ENCODE measurements at regions of chr1 and their contacts with region 1.

Region 1: GRCh38 chr1:157948312-157949073 is 45.0 kb upstream of the KIRREL1 start:
- DNase-seq: no peak
- ATAC-seq: peak; percentile 70 to 76

Region 2: DNA sequence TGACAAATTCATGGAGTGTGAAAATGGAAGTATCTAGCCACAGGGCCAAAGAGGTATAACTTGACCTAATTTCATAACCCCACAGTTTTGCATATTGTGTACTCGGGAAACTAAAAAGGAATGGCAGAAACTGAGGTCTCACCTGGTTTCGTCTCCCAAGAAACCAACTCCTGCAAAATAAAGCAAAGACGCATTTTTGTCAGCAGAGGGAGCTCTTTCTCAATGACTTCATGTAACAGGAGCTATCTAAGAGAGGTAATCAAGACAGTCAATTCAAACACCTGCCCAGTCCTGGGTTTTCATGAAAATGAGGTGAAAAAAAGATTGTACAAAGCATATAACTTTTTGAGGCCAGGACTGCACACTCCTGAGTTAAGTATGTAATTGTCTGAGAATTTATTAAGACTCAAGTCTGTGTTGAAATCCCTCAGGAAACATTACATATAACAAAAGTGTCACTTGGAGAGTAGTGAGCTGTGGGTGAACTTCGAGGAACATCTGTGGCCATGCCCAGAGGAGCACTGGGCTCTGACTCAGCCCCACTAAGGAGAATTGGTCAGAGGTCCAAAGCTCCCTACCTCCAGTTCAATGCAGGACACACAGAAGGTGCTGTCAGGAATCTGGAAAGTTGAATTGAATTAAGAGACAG is 368.2 kb before region 1 on chr1:
- intact Hi-C with region 1: loop called in 1 of 2 experiments (anchors 5 kb)
- DNase-seq: no peak
- ATAC-seq: no peak

Region 3: DNA sequence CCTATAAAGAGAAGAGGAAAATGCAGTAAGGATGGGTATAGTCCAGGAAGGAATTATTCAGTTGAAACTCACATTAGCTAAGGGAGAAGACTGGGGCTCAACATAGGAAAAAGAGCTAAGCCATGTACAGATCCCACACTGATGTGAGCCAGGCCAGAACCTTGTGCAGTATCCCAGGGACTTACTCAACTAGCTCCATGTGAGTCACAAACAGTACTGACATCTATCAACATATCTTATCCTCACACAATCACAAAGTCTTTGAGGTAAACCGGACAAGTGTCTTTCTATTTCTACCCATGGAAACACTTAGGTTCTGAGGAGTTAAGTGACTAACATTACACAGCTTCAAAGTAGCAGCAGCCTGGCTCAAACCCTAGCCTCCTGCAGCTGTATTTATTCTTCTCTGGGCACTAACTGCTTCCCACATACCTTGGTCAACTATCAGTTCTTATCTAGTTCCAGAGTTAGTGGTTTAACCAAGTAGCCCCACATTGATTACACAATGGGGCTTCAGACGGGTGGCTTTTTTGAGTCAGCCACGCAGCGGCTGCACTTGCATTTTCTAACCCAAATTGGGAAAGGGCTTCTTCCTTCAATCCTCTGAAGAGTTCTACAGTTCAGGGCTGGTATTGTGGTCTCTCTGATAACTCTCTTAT is 116.4 kb before region 1 on chr1:
- intact Hi-C with region 1: no loop called
- DNase-seq: no peak
- ATAC-seq: no peak

Region 4: DNA sequence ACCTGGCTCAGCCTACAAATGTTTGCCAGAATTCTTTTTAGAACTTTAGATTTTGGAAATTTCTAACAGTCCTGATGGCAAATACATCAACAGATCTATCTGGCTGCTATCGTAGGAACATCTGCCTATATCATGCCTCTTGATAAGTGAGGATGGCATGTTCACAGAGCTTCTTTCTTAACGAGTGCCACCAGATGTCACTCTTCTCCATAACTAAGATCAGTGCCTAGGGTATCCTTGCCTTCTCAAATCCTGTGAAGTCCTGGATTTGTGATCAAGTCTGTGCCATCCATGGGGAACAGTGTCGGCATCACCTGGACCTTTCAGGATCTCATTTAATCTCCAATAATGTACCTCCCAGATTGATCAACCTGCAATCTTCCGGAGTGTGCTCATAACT is 70.4 kb before region 1 on chr1:
- intact Hi-C with region 1: loop called (anchors 2 to 5 kb)
- DNase-seq: no peak
- ATAC-seq: peak in 1 of 2 donors; percentile 82

Region 5: DNA sequence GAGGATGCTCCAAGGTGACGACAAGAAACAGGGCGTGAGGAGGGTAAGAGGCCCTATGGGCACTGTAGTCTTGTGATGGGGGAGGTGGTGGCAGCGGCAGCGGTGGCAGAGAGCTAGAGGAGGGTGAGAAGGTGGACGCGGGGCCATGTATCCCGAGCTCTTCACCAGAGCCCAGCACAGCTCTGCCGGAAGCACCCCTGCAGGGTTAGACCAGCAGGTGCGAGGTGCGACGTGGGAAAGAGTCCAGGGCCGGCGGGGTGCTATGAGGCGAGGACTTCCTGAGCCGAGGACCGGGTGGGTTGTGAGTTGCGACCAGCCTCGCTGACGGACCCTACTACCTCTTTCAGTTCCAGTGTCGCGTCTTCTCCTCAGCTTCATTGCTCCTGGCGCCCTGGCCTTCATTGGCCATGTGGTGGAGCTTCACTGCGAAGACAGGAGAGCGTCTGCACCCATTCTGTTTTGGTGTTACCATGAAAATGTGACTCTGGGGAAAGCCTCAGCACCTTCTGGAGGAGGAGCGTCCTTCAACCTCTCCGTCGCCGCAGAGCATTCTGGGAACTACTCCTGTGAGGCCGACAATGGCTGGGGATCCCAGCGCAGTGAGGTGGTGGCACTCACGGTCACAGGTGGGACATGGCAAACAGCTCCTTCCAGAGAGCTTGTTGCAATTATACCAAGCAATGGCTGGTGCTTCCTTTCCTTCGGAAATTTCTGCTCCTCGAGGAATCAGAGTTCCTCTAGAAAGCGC is 22.9 kb before region 1 on chr1:
- intact Hi-C with region 1: no loop called
- DNase-seq: no peak
- ATAC-seq: no peak

Measured in left cardiac atrium (tissue), 4 donors.